H1 (cell line): ENCODE measurements at regions of chr2 and their contacts with region 1.

Region 1: DNA sequence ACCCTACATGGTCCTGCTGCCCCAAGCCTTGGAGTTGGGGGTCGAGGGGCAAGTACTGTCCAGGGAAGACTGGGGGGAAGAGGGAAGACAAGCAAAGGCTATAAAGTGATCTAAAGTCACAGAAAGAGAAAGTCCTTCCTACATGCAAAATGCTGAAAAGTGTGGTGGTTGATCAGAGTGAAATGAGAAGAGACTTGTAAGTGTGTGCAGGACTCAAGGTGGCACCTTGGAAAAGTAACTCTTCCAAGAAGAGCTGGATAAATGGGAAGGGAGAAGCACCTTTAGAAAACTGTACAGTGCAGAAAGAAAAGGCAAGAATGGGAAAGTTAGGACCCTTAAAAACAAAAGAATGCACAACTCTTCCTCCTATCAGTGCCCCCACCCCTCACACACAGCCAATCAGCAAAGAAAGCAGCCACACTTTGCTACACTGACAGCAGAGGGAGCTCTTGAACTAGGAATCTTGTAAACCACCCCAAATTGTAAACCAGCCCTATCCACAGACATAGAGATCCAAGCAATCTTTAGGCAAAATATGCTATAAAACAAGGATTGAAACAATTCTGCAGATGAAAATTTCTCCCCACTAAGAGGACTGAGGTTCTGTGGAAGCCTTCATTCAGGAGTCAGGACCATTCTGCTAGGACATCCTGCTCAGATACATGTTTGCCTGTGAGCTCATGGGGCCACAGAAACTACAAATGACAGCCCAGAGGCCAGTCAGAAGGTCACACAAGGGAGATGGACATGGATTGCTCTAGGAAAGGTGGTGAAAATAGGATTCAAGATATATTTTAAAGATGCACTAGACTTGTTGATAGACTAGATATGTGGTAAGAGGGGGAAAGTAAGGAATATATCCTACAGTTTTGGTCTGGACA is 146.4 kb downstream of the FTCDNL1 start:
- DNase-seq: peak in 1 of 2 experiments; percentile 59
- H3K4me3 ChIP-seq: no peak overlapping the region
- H3K27ac ChIP-seq: no peak overlapping the region
- H3K4me1 ChIP-seq: no peaks in the 10 kb centered on the region
- H3K27me3 ChIP-seq: no peaks in the 10 kb centered on the region
- CTCF ChIP-seq: peak; percentile 34 to 87 (median 85)
- EP300 ChIP-seq: no peak
- POLR2A ChIP-seq: no peak
- RAD21 ChIP-seq: peak; percentile 92 to 96

Region 2: GRCh38 chr2:199424160-199424559 is 280.4 kb before region 1 on chr2:
- CTCF ChIA-PET with region 1: no interaction called
- POLR2A ChIA-PET with region 1: no interaction called
- DNase-seq: no peak
- H3K4me3 ChIP-seq: no peak overlapping the region
- H3K27ac ChIP-seq: no peak overlapping the region
- H3K4me1 ChIP-seq: peaks cover 0 to 4% (median 0%) of the 10 kb centered on the region in 4 experiments; a peak in 1 of 7 replicates
- H3K27me3 ChIP-seq: no peaks in the 10 kb centered on the region; a peak in 1 of 7 replicates
- CTCF ChIP-seq: no peak
- EP300 ChIP-seq: no peak
- POLR2A ChIP-seq: no peak
- RAD21 ChIP-seq: no peak

Region 3: DNA sequence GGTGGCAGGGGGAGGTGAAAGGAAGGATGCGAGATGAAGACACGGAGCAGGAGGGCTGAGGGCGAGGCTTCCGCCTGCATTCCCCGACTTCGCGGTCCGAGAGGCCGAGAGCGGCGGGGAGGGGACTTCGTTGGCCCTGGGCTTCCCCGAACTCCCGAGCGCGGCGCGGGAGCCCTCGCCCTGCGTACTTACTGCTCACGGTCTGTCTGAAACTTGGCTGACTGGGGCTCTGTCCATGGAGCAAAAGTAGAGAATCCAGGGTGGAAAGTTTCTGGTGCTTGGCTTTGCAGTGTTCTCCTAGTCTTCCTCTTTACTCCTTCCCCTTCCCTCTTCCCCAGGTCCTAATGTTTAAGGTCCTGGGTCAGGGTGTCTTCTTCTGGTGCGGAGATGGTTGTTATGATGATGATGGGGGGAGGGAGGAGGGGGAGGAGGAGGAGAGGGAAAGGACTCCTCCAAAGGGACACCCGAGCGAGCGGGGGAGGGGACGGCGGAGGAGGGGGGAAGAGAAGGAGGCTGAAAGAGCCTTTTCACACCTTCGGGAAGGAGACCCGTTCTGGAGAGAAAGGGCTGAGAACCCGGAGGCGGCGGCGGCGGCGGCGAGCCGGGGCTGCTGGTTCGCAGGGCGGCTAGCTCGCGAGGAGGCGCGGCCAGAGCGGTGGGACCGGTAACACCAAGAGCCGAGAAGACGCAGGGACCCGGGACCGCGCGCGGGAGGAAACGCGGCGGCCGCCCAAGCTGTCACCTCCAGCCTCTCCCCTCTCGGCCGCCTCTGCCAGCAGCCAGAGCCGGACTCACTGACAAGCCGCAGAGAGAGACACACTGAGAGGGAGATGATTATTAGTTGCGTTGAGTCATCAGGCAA is 247.2 kb before region 1 on chr2 and contains the start of gene SATB2:
- CTCF ChIA-PET with region 1: no interaction called
- POLR2A ChIA-PET with region 1: no interaction called
- DNase-seq: peak in 1 of 2 experiments; percentile 74
- H3K4me3 ChIP-seq: peak within 1 kb of the TSS; percentile 60 to 73 (median 64)
- H3K27ac ChIP-seq: no peak within 1 kb of the TSS
- H3K4me1 ChIP-seq: peaks cover 0 to 18% (median 7%) of the 10 kb centered on the region in 4 experiments; a peak in 5 of 7 replicates
- H3K27me3 ChIP-seq: peaks cover 10 to 56% (median 33%) of the 10 kb centered on the region in 4 experiments; a peak in 6 of 7 replicates
- CTCF ChIP-seq: no peak
- EP300 ChIP-seq: no peak
- POLR2A ChIP-seq: no peak
- RAD21 ChIP-seq: no peak
- total RNA-seq, gene SATB2: 5.1 and 5.7 TPM in 2 replicates

Region 4: DNA sequence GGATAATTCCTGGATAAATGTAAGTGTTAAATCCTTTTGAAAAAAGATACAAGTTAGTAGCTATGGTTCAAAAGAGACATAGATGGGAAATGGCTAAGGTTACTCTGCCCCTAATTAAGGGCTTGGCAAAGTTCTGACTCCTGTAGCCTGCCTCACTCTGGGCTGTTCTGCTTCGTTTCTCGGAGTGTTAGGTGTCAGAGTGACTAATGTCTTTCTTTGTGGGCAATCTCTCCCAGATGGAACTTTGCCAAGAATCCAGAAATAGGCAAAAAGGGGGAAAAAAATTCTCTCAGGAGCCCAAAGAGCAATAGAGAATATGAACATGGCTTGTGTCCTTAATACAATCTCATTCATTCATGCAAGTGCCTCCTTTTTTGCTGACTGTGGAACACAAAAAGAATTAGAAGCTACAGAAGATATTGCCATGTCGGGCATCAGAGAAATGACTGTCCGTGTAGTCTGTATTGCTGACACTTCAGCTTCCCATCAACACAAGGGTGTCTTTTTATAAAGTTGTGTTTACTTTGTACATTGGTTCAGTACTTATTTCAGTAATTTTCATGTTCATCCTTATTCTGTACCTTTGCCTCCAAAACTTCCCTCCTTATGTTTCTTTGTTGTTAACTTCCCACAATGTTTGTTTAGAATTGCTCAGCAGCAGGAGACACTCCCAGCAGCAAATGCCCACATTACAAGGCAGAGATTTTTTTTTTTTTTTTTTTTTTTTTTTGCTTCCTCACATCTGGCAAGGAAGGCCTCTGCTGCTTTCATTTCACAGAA is 12.4 kb after region 1 on chr2:
- CTCF ChIA-PET with region 1: interaction called, 13 read pairs
- POLR2A ChIA-PET with region 1: no interaction called
- DNase-seq: no peak
- H3K4me3 ChIP-seq: no peak overlapping the region
- H3K27ac ChIP-seq: no peak overlapping the region
- H3K4me1 ChIP-seq: no peaks in the 10 kb centered on the region
- H3K27me3 ChIP-seq: no peaks in the 10 kb centered on the region
- CTCF ChIP-seq: no peak
- EP300 ChIP-seq: no peak
- POLR2A ChIP-seq: no peak
- RAD21 ChIP-seq: no peak

Region 5: DNA sequence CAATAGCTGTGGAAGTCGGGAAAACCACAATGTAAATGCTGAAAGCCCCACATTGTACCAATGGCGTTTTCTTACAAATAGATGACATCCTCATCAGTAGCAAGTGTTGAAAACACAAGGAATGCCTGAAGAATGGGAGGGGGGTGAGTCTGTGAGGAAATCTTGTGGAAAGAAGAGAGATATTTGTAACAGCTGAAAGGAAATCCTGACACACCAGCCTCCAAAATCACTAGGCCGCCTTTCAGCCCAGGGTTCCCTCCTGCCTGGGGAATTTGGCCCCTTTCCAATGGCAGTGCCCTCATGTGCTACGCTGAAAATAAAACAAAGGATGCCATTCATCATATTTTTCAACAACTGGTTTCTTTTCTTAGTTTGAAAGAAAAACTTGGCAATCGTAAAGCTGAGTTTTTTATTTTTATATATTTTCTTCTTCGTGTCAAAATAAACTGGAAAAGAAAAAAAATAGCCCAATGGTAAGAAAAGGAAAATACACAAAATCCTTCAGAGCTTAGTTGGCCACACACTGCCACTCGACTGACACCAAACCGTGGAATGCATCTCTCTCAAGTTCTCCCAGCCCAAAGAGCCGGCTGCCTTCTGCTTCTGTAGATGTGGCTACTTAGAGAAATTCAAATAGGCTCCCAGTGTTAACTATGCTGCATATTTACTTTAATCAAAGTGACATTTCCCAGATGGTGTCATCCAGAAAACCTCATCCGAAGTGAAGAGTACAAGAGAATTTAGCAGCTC is 94.4 kb after region 1 on chr2:
- CTCF ChIA-PET with region 1: interaction called, 10 read pairs
- POLR2A ChIA-PET with region 1: no interaction called
- DNase-seq: no peak
- H3K4me3 ChIP-seq: no peak overlapping the region
- H3K27ac ChIP-seq: no peak overlapping the region
- H3K4me1 ChIP-seq: peaks cover 0 to 6% (median 3%) of the 10 kb centered on the region in 4 experiments; a peak in 4 of 7 replicates
- H3K27me3 ChIP-seq: no peaks in the 10 kb centered on the region; a peak in 1 of 7 replicates
- CTCF ChIP-seq: no peak
- EP300 ChIP-seq: no peak
- POLR2A ChIP-seq: no peak
- RAD21 ChIP-seq: no peak

Region 6: DNA sequence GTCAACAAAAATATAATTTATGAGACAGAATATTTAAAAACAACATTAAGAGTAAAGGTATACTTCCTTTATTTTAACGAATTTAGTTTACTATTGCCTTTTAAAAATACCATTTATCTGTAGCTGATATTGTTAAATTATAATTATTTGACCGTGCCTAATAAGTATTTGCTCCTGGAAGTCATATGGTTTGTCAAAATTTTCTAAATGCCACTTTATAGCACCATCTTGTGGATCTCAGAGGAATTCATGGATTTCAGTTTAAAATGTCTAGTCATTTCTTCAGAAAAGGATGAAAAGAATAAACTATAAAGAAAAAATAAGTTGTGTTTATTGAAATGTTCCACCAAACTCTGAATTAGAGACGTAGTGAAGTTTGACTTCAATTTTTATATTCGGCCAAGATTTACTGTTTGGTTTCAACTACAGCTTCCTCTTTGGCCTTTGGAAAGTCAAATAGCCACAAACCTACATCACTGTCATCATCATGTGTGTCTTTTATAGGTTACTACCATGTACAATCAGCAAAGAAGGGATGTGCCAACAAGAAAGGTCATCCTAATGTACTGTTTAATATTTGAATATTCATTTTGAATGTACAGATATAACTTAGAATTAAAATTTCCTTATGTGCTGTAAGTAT is 156.7 kb after region 1 on chr2:
- CTCF ChIA-PET with region 1: interaction called, 28 read pairs
- POLR2A ChIA-PET with region 1: interaction called, 3 read pairs
- DNase-seq: no peak
- H3K4me3 ChIP-seq: no peak overlapping the region
- H3K27ac ChIP-seq: no peak overlapping the region
- H3K4me1 ChIP-seq: peaks cover 0 to 2% (median 0%) of the 10 kb centered on the region in 4 experiments; a peak in 1 of 7 replicates
- H3K27me3 ChIP-seq: no peaks in the 10 kb centered on the region
- CTCF ChIP-seq: peak in 2 of 3 experiments; percentile 36 to 40; a peak in 2 of 4 replicates
- EP300 ChIP-seq: no peak
- POLR2A ChIP-seq: no peak
- RAD21 ChIP-seq: peak; percentile 65 to 80